ENCODE measurements at regions of chr6 and their contacts with region 1.

Region 1: GRCh38 chr6:4135665-4136353 is 434 bp upstream of the ECI2 start:
- DNase-seq: peak; percentile 92
- H3K4me3 ChIP-seq: peak overlapping the region; percentile 73
- H3K27ac ChIP-seq: peak overlapping the region; percentile 57
- H3K4me1 ChIP-seq: peaks cover 46% of the 10 kb centered on the region
- CTCF ChIP-seq: peak; percentile 27; the same call in 1 of the 2 replicates

Region 2: DNA sequence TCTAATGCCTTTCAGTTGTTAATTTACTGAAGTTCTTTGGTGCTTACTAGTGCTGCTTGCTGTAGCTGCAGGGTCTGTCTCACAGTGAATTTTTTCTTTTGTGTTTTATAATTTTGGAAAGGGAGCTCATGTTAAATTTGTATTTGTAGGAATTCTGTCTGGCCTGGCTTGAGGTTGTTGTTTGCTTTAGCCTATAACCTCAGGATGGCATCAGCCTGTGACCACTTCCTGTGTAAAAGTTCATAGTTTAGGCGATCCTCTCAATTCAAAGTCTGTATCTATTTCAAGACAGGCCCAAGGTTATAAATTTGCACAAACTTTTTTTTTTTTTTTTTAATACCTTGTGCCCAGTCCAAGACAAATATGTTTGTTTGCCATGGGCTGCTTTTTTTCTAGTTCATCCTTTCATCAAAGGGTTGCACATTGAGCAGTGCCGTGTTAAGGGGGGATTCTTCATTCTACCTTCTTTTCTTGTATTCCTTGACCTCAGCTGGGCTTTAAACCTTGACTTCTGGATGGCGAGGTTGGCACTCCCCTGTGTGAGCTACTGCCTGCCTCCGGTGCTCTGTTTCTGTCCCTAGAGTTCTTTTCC is 1060.2 kb before region 1 on chr6:
- CTCF ChIA-PET with region 1: no interaction called
- POLR2A ChIA-PET with region 1: no interaction called
- intact Hi-C with region 1: loop called (anchors 10 kb)
- DNase-seq: peak; percentile 60
- H3K4me3 ChIP-seq: peak overlapping the region; percentile 46
- H3K27ac ChIP-seq: peak overlapping the region; percentile 66
- H3K4me1 ChIP-seq: peaks cover 47% of the 10 kb centered on the region
- CTCF ChIP-seq: no peak

Region 3: DNA sequence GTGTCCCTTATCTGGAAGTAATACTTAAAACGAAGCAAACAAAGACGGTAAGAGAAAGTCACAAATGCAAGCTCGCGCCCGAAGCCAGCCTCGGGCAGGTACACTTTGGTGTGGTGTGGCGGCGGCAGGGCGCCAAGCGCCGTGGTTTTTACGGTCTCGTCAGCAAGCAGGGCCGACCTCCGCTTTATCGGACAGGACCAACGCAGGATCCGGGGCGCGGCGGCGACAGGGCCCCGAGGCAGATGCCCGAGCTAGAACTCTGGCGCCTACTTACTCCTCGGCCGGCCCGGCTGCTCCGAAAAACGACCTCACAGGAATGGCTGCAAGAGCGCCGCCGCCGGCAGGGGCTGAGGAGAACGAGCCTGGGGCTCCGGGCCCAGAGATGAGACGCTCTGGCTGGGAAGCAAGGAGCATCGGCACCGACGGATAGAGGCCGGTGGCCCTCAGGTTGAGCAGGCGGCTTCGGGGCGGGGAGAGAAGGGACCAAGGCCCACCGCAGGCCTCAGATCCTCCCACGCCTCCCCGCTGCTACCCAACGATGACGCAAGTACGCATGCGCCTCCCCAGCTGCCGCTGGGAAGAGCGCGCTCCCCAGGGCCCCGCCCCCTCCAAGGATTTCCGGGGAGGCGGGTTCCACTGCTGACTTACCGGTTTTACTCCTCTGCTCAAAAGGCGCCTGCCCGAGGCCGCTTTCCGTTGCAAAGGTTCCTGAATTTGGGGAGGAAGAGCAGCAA is 117.5 kb before region 1 on chr6:
- CTCF ChIA-PET with region 1: interaction called, 6 read pairs
- POLR2A ChIA-PET with region 1: interaction called, 12 read pairs
- intact Hi-C with region 1: loop called (anchors 1 kb)
- DNase-seq: peak; percentile 97
- H3K4me3 ChIP-seq: peak overlapping the region; percentile 89
- H3K27ac ChIP-seq: peak overlapping the region; percentile 94
- H3K4me1 ChIP-seq: peaks cover 38% of the 10 kb centered on the region
- CTCF ChIP-seq: peak; percentile 68

Region 4: DNA sequence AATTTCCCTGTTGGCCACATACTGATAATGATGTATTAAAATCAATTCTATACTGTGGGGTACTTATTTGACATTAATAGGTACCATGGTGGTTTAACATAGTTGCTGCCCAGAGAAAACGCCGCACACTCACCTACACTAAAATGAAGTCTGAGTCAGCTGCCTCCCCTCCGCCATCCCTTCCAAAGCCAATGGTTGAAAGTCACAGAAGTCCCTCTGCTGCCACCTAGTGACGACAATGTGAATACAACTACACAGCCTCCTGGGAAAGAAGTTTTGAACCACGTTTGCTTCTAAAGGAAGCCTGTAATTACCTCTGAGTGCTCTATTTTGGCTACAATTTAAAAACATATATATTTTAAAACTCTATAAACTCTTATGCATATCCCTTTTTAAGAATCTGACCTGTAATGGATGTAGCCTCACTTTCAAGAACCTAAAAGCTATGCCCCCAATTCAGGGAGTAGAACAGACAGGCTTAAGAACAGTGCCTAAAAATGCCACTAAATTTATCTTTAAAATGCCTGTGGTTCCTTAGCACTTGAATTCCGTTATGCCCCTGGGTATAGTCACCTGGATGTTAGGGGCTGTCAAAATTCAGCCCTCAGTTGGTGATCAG is 20.1 kb after region 1 on chr6:
- CTCF ChIA-PET with region 1: interaction called, 4 read pairs
- POLR2A ChIA-PET with region 1: interaction called, 16 read pairs
- intact Hi-C with region 1: loop called (anchors 2 kb)
- DNase-seq: peak; percentile 80
- H3K4me3 ChIP-seq: no peak overlapping the region
- H3K27ac ChIP-seq: no peak overlapping the region
- H3K4me1 ChIP-seq: peaks cover 31% of the 10 kb centered on the region
- CTCF ChIP-seq: peak; percentile 95

Measured in OCI-LY7 (cell line).